ENCODE measurements at regions of chr4 and their contacts with region 1.

Region 1: DNA sequence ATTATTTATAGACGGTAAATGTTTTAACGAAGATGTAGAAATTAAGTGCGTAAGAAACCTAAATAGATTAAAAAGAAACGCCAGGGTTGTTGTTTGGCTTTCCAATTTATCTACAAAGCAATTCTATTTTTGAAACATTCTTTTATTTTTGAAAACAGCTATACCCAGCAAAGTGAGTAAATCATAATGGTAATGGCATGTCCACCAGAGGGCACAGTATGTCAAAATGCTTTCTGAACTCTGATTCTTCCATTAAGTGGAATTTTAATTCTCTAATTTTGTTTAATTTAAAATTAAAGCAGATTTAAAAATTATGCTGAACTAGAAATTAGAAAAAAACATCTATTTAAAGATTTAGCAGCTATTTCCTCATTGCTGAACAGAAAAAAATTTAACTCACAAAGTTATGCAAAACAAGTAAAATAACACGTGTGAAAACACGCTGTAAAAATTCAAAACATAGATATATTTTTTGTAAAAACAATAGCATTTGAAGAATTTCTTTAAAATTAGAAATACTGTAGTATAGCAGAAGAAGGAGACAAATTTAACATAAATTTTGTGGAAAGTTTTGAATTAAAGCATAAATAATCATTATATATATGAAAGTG is 26.5 kb downstream of the RASSF6 start:
- DNase-seq: peak; percentile 32
- ATAC-seq: no peak
- H3K4me3 ChIP-seq: no peak overlapping the region
- H3K4me3 Mint-ChIP-seq: no peak overlapping the region
- H3K27ac ChIP-seq: no peak overlapping the region
- H3K27ac Mint-ChIP-seq: no peak overlapping the region
- H3K4me1 ChIP-seq: peaks cover 12 to 16% of the 10 kb centered on the region in 2 donors
- H3K4me1 Mint-ChIP-seq: peaks cover 43% of the 10 kb centered on the region
- H3K27me3 ChIP-seq: no peaks in the 10 kb centered on the region
- H3K27me3 Mint-ChIP-seq: no peaks in the 10 kb centered on the region
- CTCF ChIP-seq: peak; percentile 70

Region 2: GRCh38 chr4:73620115-73620792 is 26.5 kb after region 1 on chr4 and contains the start of gene RASSF6:
- CTCF ChIA-PET with region 1: interaction called, 3 read pairs
- POLR2A ChIA-PET with region 1: no interaction called
- intact Hi-C with region 1: loop called (anchors 5 kb)
- DNase-seq: peak; percentile 38
- ATAC-seq: peak; percentile 85
- H3K4me3 ChIP-seq: peak within 1 kb of the TSS in 4 of 5 experiments; percentile 26 to 52 (median 42)
- H3K4me3 Mint-ChIP-seq: peak within 1 kb of the TSS; percentile 86
- H3K27ac ChIP-seq: no peak within 1 kb of the TSS
- H3K27ac Mint-ChIP-seq: peak within 1 kb of the TSS; percentile 64
- H3K4me1 ChIP-seq: peaks cover 8 to 10% of the 10 kb centered on the region in 2 donors
- H3K4me1 Mint-ChIP-seq: peaks cover 25% of the 10 kb centered on the region
- H3K27me3 ChIP-seq: peaks cover 0 to 9% (median 3%) of the 10 kb centered on the region in 4 experiments
- H3K27me3 Mint-ChIP-seq: peaks cover 5% of the 10 kb centered on the region
- CTCF ChIP-seq: no peak
- total RNA-seq, gene RASSF6: 13.1 and 14.6 TPM in 2 replicates

Region 3: DNA sequence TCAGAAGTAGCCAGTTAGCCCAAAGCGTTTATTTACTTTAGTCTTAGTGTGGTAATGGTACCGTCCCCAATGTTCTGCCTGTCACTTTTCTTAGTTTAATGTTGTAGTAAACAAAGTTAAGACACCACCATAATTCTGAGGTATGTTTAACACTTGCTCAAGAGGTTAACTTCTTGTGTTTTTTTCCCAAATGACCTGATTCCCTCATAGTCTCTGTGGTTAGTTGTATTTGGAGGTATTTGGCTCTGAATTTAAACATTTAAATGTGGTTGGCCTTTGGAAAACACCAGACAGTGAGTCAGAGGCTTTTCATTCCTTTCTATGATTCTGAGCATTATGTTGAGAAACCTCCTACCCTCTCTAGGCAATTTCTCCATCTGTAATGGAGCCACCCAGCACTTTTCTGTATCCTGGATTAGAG is 323.4 kb after region 1 on chr4:
- CTCF ChIA-PET with region 1: no interaction called
- POLR2A ChIA-PET with region 1: no interaction called
- intact Hi-C with region 1: no loop called
- DNase-seq: no peak
- ATAC-seq: no peak
- H3K4me3 ChIP-seq: no peak overlapping the region
- H3K4me3 Mint-ChIP-seq: no peak overlapping the region
- H3K27ac ChIP-seq: no peak overlapping the region
- H3K27ac Mint-ChIP-seq: no peak overlapping the region
- H3K4me1 ChIP-seq: no peaks in the 10 kb centered on the region
- H3K4me1 Mint-ChIP-seq: no peaks in the 10 kb centered on the region
- H3K27me3 ChIP-seq: no peaks in the 10 kb centered on the region
- H3K27me3 Mint-ChIP-seq: no peaks in the 10 kb centered on the region
- CTCF ChIP-seq: no peak